ENCODE measurements at regions of chr16 and their contacts with region 1.

Region 1: GRCh38 chr16:85610508-85611332 is 2.4 kb upstream of the GSE1 start:
- DNase-seq: peak; percentile 90 to 96
- ATAC-seq: peak; percentile 78
- H3K4me3 ChIP-seq: peak overlapping the region in 1 of 2 donors; percentile 33
- H3K27ac ChIP-seq: peak overlapping the region in 1 of 2 donors; percentile 85
- H3K4me1 ChIP-seq: no peaks in the 10 kb centered on the region
- H3K27me3 ChIP-seq: no peaks in the 10 kb centered on the region

Region 2: GRCh38 chr16:85305996-85306792 is 304.5 kb before region 1 on chr16:
- intact Hi-C with region 1: loop called in 1 of 2 experiments (anchors 5 kb)
- DNase-seq: peak; percentile 96 to 97
- ATAC-seq: peak; percentile 84
- H3K4me3 ChIP-seq: no peak overlapping the region
- H3K27ac ChIP-seq: no peak overlapping the region
- H3K4me1 ChIP-seq: no peaks in the 10 kb centered on the region
- H3K27me3 ChIP-seq: no peaks in the 10 kb centered on the region

Region 3: GRCh38 chr16:85369741-85370528 is 240.8 kb before region 1 on chr16:
- intact Hi-C with region 1: loop called in 1 of 2 experiments (anchors 5 kb)
- DNase-seq: peak; percentile 75 to 92
- ATAC-seq: peak; percentile 53
- H3K4me3 ChIP-seq: no peak overlapping the region
- H3K27ac ChIP-seq: peak overlapping the region in 1 of 2 donors; percentile 43
- H3K4me1 ChIP-seq: no peaks in the 10 kb centered on the region
- H3K27me3 ChIP-seq: no peaks in the 10 kb centered on the region

Region 4: DNA sequence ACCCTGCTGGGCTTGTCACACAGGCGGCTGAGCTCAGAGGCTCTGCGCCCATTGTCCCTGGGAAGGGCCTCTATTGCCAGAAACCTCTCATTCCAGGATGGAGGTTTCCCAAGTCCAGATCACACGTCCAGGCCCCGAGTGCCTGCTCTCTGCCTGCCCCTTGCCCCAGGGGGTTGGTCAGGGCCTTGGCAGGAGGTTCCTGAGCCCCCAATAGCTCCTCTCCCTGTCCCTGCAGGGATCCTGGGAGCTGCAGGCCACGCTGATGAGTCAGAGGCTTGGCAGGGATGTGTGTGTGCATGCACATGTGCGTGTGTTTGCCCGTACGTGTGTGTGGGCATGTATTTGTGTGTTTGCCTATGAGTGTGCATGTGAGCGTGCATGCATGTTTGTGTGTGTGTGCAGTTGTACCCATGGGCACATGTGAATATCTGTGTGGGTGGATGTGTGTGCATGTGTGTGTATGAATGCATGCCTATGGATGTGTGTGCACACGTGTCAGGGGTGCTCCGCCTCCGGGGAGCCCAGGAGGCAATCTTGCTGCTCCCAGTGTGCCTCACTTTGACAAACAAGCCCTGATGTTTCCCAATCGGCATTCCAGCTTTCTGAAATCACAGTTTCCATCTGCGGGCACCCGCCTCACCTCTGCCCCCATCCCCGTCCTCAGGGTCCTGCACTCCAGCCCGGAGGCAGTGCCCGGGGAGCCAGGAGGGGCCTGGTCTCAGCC is 96.0 kb before region 1 on chr16:
- intact Hi-C with region 1: loop called in 1 of 2 experiments (anchors 2 kb)
- DNase-seq: peak; percentile 91 to 93
- ATAC-seq: peak; percentile 87
- H3K4me3 ChIP-seq: no peak overlapping the region
- H3K27ac ChIP-seq: peak overlapping the region; percentile 9 to 69
- H3K4me1 ChIP-seq: peaks cover 0 to 5% of the 10 kb centered on the region in 2 donors
- H3K27me3 ChIP-seq: no peaks in the 10 kb centered on the region

Measured in aorta (tissue), 5 donors.